CD8-positive, alpha-beta T cell (primary cell): ENCODE measurements at regions of chr5 and their contacts with region 1.

Region 1: DNA sequence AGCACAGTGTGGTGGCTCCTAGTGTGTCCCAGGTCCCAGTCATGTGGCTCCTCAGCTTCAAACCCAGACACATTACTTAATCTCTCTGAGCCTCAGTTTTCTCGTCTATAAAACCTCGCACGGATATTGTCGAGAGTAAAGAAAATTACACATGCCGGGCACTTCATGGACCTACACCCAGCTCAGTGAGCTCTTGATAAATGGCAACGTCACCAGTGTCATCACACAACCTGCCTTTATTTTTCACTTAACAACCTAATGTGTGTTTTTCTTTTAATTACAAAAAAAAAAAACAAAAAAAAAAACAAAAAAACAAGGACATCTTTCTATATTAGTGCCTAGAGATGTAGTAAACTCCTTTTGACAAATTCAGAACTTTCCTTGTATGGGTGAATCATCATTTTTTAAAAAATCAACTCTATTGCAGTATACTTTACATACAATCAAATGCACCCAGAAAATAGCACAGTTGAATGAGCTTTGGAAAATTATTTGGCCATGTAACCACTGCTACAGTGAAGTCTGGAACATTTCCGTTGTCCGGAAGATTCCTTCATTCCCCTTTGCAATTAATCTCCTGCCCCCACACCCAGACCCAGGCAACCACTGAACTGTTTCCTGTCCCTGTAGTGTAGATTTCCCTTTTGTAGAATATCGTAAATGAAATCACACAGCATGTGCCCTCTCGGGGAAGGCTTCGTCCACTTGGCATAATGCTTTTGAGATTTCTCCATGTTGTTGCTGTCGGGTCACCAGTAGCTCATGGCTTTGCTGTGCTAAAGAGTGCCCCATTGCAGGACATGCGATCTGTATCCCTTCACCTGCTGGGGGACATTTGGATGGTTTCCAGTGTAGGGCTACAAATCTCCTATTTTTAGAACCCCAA is 100.4 kb upstream of the LARP1 start:
- DNase-seq: no peak
- ATAC-seq: no peak
- H3K4me3 ChIP-seq: no peak overlapping the region
- H3K4me3 Mint-ChIP-seq: no peak overlapping the region
- H3K27ac ChIP-seq: no peak overlapping the region
- H3K27ac Mint-ChIP-seq: no peak overlapping the region
- H3K4me1 ChIP-seq: peaks cover 8% of the 10 kb centered on the region
- H3K4me1 Mint-ChIP-seq: peaks cover 9% of the 10 kb centered on the region
- H3K27me3 ChIP-seq: no peaks in the 10 kb centered on the region
- H3K27me3 Mint-ChIP-seq: no peaks in the 10 kb centered on the region
- CTCF ChIP-seq: no peak

Region 2: GRCh38 chr5:153700940-153701339 is 953.8 kb before region 1 on chr5:
- CTCF ChIA-PET with region 1: no interaction called
- POLR2A ChIA-PET with region 1: no interaction called
- intact Hi-C with region 1: no loop called
- DNase-seq: no peak
- ATAC-seq: no peak
- H3K4me3 ChIP-seq: no peak overlapping the region
- H3K4me3 Mint-ChIP-seq: no peak overlapping the region
- H3K27ac ChIP-seq: no peak overlapping the region
- H3K27ac Mint-ChIP-seq: no peak overlapping the region
- H3K4me1 ChIP-seq: no peaks in the 10 kb centered on the region
- H3K4me1 Mint-ChIP-seq: no peaks in the 10 kb centered on the region
- H3K27me3 ChIP-seq: no peaks in the 10 kb centered on the region
- H3K27me3 Mint-ChIP-seq: peaks cover 2% of the 10 kb centered on the region
- CTCF ChIP-seq: no peak

Region 3: DNA sequence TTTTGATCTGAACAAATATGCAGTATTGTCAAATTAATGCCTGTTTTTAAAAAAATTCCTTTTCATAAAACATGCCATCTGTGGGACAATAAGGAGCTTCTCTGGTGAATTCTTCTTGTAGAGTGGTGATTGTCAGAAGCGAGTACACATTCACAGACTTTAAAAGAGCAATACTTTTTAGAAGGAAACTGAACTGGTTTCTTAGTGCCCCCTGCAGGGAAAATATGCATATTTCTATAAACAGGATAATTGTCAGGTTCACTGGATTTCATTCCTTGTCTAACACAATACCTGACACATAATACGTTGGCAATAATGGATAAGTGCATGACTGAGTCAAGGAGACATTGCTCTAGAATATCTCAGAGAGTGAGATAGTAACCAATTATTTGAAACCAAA is 492.5 kb after region 1 on chr5:
- CTCF ChIA-PET with region 1: interaction called, 5 read pairs
- POLR2A ChIA-PET with region 1: no interaction called
- intact Hi-C with region 1: loop called in 1 of 2 experiments (anchors 10 kb)
- DNase-seq: no peak
- ATAC-seq: no peak
- H3K4me3 ChIP-seq: no peak overlapping the region
- H3K4me3 Mint-ChIP-seq: no peak overlapping the region
- H3K27ac ChIP-seq: no peak overlapping the region
- H3K27ac Mint-ChIP-seq: no peak overlapping the region
- H3K4me1 ChIP-seq: no peaks in the 10 kb centered on the region
- H3K4me1 Mint-ChIP-seq: no peaks in the 10 kb centered on the region
- H3K27me3 ChIP-seq: peaks cover 0 to 2% of the 10 kb centered on the region in 2 experiments
- H3K27me3 Mint-ChIP-seq: no peaks in the 10 kb centered on the region
- CTCF ChIP-seq: no peak